Posterior cingulate gyrus (tissue), 11 donors: ENCODE measurements at regions of chr9 and their contacts with region 1.

Region 1: DNA sequence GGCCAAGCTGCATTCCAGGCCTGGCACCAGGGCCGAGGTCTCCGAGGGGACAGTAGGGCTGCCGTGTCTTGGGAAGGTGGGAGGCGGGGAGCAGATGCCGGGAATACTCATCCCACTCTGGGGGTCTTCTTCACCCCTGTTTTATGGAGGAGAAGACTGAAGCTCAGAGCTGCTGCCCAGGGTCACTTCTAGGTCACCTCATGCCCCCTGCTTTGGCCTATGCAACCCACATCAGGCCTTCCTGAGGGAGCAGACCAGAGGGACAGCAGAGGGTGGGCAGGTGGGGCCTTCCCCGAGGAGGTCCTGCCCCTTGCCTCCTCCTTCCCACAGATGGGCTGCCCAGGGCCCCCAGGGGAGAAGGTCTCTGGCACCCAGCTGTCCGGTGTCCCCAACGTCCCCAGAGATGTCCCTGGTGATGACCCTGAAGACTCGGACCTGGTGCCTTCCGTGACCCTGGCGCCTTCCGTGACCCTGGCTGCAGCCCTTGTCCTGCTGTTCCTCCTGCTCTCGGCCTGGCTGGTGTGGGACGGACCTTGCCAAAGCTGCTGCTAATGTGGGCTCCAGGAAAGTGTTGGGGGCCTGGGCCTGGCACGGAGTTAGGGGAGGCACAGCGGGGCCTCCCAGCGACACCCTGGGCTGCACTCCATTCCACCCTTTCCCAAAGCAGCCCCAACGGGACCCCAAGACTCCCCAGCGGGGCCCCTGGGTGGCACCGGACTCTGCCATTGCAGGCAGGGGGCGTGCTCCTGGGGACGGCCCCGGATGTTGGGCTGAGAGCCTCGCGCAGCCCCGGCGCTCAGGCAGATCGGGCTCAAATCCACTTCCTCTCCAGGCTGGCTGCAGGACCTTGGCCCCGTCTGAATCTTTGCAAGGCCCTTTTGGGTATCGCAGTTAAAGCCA is 6.7 kb upstream of the SLC2A6 start:
- DNase-seq: peak in 4 of 10 donors; percentile 22 to 81 (median 72)

Region 2: DNA sequence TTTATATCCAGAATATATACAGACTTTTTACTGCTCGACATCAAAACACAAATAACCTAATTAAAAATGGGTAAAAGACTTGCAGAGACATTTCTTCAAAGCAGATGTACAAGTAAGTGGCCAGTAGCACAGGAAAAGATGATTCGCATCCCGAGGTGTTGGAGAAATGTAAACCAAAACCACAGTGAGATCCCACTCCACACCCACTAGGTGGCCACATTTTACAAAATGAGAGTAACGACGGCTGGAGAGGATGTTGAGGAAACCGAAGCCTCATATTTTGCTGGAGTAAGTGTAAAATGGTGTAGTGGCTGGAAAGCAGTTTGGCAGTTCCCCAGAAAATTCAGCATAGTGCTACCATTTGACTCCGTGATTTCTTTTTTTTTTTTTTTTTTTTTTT is 300.6 kb before region 1 on chr9:
- intact Hi-C with region 1: loop called (anchors 2 kb)
- DNase-seq: peak in 4 of 10 donors; percentile 45 to 83 (median 47)

Region 3: DNA sequence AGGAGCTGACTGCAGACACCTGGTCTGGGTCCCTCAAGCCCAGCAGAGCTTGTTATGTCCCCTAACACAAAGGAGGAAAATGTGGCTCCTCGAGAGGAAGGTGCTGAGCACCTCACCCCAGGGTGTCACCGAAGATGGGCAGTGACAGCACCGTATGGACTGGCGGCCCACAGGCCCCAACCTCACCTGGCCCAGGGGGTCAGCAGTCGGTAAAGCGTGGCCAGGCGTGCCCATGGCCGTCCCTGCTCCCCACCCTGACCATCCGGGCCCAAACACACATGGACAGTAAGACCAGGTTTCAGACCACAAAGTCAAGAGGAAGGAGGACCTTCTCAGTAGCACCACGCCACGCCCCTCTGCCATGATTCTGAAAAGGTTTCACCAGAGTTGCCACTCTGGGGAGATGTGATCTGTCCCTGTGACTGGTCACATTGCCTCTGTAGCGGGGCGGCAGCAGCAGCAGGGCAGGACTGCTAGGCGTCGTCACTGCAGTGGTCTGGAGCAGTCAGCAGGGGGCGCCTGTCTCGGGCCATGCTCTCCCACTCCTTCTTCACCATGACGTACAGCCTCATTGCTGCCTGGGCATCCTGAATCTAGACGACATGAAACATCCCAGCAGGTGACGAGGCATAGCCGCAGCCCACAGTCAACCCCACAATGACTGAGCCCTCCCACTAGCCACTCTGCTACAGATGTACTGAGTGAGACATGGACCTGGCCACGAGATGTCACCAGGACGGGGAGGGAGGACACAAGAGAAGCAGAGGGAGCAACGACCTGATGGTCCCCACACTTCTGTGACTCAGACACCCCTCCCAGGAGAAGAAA is 78.9 kb before region 1 on chr9:
- intact Hi-C with region 1: loop called (anchors 2 kb)
- DNase-seq: peak; percentile 66 to 98 (median 82)